PC-3 (cell line): ENCODE measurements at regions of chr6 and their contacts with region 1.

Region 1: GRCh38 chr6:10759312-10759839 is 11.8 kb downstream of the TMEM14B start:
- DNase-seq: peak; percentile 99
- ATAC-seq: peak; percentile 71
- H3K4me3 ChIP-seq: peak overlapping the region; percentile 47
- H3K27ac ChIP-seq: peak overlapping the region; percentile 76
- H3K4me1 ChIP-seq: peaks cover 29% of the 10 kb centered on the region
- H3K27me3 ChIP-seq: no peaks in the 10 kb centered on the region
- CTCF ChIP-seq: peak; percentile 73

Region 2: GRCh38 chr6:10404107-10404798 is 355.1 kb before region 1 on chr6:
- CTCF ChIA-PET with region 1: no interaction called
- POLR2A ChIA-PET with region 1: no interaction called
- intact Hi-C with region 1: no loop called
- DNase-seq: peak; percentile 98
- ATAC-seq: peak; percentile 78
- H3K4me3 ChIP-seq: peak overlapping the region; percentile 91
- H3K27ac ChIP-seq: peak overlapping the region; percentile 100
- H3K4me1 ChIP-seq: peaks cover 81% of the 10 kb centered on the region
- H3K27me3 ChIP-seq: no peaks in the 10 kb centered on the region
- CTCF ChIP-seq: peak; percentile 42

Region 3: GRCh38 chr6:10722820-10723566 is 36.4 kb before region 1 on chr6 and contains the start of gene TMEM14C:
- CTCF ChIA-PET with region 1: no interaction called
- POLR2A ChIA-PET with region 1: interaction called, 5 read pairs
- intact Hi-C with region 1: loop called (anchors 1 kb)
- DNase-seq: peak; percentile 96
- ATAC-seq: peak; percentile 96
- H3K4me3 ChIP-seq: peak within 1 kb of the TSS; percentile 88
- H3K27ac ChIP-seq: peak within 1 kb of the TSS; percentile 67
- H3K4me1 ChIP-seq: peaks cover 24% of the 10 kb centered on the region
- H3K27me3 ChIP-seq: no peaks in the 10 kb centered on the region
- CTCF ChIP-seq: no peak
- total RNA-seq, gene TMEM14C: 85.8 and 87.8 TPM in 2 replicates

Region 4: GRCh38 chr6:10733151-10733715 is 26.1 kb before region 1 on chr6:
- CTCF ChIA-PET with region 1: interaction called, 14 read pairs
- POLR2A ChIA-PET with region 1: no interaction called
- intact Hi-C with region 1: no loop called
- DNase-seq: no peak
- ATAC-seq: no peak
- H3K4me3 ChIP-seq: no peak overlapping the region
- H3K27ac ChIP-seq: peak overlapping the region; percentile 69; the same call in 1 of the 2 replicates
- H3K4me1 ChIP-seq: peaks cover 25% of the 10 kb centered on the region
- H3K27me3 ChIP-seq: no peaks in the 10 kb centered on the region
- CTCF ChIP-seq: no peak

Region 5: GRCh38 chr6:10747251-10747972 is 12.0 kb before region 1 on chr6 and contains the start of gene TMEM14B:
- CTCF ChIA-PET with region 1: no interaction called
- POLR2A ChIA-PET with region 1: no interaction called
- intact Hi-C with region 1: loop called (anchors 1 kb)
- DNase-seq: peak; percentile 98
- ATAC-seq: peak; percentile 95
- H3K4me3 ChIP-seq: peak within 1 kb of the TSS; percentile 99
- H3K27ac ChIP-seq: peak within 1 kb of the TSS; percentile 49
- H3K4me1 ChIP-seq: peaks cover 25% of the 10 kb centered on the region
- H3K27me3 ChIP-seq: no peaks in the 10 kb centered on the region
- CTCF ChIP-seq: no peak
- total RNA-seq, gene TMEM14B: 93.8 and 115 TPM in 2 replicates

Region 6: GRCh38 chr6:10800829-10801535 is 41.6 kb after region 1 on chr6:
- CTCF ChIA-PET with region 1: interaction called, 3 read pairs
- POLR2A ChIA-PET with region 1: no interaction called
- intact Hi-C with region 1: loop called (anchors 1 kb)
- DNase-seq: peak; percentile 82
- ATAC-seq: peak; percentile 99
- H3K4me3 ChIP-seq: no peak overlapping the region
- H3K27ac ChIP-seq: no peak overlapping the region
- H3K4me1 ChIP-seq: peaks cover 9% of the 10 kb centered on the region
- H3K27me3 ChIP-seq: no peaks in the 10 kb centered on the region
- CTCF ChIP-seq: peak; percentile 99

Region 7: DNA sequence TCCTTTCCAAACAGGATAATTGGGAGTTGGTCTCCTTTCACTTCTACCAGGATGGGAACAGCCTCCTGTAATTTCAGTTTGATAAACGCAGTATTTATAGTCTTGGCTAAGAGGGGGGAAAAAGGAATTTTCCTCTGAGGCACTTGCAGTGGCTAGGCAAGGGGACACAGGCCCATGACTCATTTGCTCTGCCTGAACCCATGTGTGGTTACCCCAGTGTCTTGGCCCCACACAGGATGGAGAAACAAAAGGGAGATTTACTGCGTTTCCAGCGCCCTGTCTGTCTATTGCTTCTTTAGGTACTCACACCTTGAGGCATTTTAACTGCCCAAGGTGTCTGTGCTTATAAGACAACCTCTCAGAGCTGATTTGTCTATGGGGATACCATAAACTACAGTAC is 547.9 kb after region 1 on chr6:
- CTCF ChIA-PET with region 1: no interaction called
- POLR2A ChIA-PET with region 1: interaction called, 10 read pairs
- intact Hi-C with region 1: no loop called
- DNase-seq: no peak
- ATAC-seq: no peak
- H3K4me3 ChIP-seq: no peak overlapping the region
- H3K27ac ChIP-seq: no peak overlapping the region
- H3K4me1 ChIP-seq: no peaks in the 10 kb centered on the region
- H3K27me3 ChIP-seq: no peaks in the 10 kb centered on the region
- CTCF ChIP-seq: no peak